Activated CD4-positive, alpha-beta memory T cell treated with anti-CD3 and anti-CD28 coated beads for 36 hours (primary cell): ENCODE measurements at regions of chr2 and their contacts with region 1.

Region 1: GRCh38 chr2:73963385-73964120 is 21.2 kb upstream of the TET3 start:
- DNase-seq: peak; percentile 74
- H3K4me3 Mint-ChIP-seq: peak overlapping the region; percentile 53
- H3K27ac Mint-ChIP-seq: peak overlapping the region; percentile 86
- H3K4me1 Mint-ChIP-seq: peaks cover 30% of the 10 kb centered on the region
- H3K27me3 Mint-ChIP-seq: no peaks in the 10 kb centered on the region

Region 2: GRCh38 chr2:73931531-73932500 is 31.7 kb before region 1 on chr2:
- CTCF ChIA-PET with region 1: no interaction called
- POLR2A ChIA-PET with region 1: interaction called, 4 read pairs
- intact Hi-C with region 1: loop called (anchors 1 kb)
- DNase-seq: peak; percentile 77
- H3K4me3 Mint-ChIP-seq: peak overlapping the region; percentile 4
- H3K27ac Mint-ChIP-seq: peak overlapping the region; percentile 75
- H3K4me1 Mint-ChIP-seq: peaks cover 75% of the 10 kb centered on the region
- H3K27me3 Mint-ChIP-seq: no peaks in the 10 kb centered on the region

Region 3: DNA sequence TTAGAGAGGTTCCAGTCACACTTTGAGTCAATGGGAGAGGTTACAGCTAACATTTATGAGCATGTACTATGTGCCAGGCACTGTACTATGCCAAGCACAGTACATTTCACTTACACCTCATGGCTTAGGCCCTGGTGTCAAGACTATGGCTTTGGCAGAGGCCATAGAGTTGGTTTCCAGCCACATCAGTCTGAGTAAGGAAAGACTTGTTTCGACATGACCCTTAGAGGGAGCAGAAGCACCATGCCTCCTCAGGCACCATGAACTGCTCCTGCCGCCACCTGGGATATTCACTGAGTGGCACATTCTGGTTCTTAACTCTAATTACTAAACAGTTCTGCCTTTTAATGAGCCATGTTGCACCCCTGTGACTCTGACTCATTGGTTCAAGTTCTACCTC is 24.1 kb before region 1 on chr2:
- CTCF ChIA-PET with region 1: interaction called, 4 read pairs
- POLR2A ChIA-PET with region 1: interaction called, 5 read pairs
- intact Hi-C with region 1: loop called (anchors 1 kb)
- DNase-seq: peak; percentile 56
- H3K4me3 Mint-ChIP-seq: no peak overlapping the region
- H3K27ac Mint-ChIP-seq: peak overlapping the region; percentile 73
- H3K4me1 Mint-ChIP-seq: peaks cover 85% of the 10 kb centered on the region
- H3K27me3 Mint-ChIP-seq: no peaks in the 10 kb centered on the region

Region 4: DNA sequence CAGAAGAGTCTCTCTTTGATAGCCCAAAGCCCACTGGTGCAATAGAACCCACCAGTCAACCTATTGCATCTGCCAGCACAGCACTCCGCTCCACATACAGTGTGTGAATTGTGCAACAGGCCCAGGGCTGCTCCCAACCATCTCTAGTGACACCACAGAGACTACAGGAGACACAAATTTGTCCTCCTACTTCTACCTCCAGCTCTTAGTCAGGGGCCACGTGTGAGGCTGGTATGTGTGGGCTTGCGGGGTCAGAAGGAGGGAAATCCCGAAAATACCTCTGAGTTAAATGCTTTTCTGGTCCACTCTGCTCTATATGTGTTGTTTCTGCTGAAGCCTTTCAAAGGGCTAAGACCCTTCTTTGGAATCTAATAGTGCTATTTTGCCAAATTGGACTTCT is 18.8 kb before region 1 on chr2:
- CTCF ChIA-PET with region 1: interaction called, 3 read pairs
- POLR2A ChIA-PET with region 1: interaction called, 5 read pairs
- intact Hi-C with region 1: loop called (anchors 1 kb)
- DNase-seq: peak; percentile 70
- H3K4me3 Mint-ChIP-seq: no peak overlapping the region
- H3K27ac Mint-ChIP-seq: peak overlapping the region; percentile 1
- H3K4me1 Mint-ChIP-seq: peaks cover 75% of the 10 kb centered on the region
- H3K27me3 Mint-ChIP-seq: no peaks in the 10 kb centered on the region

Region 5: GRCh38 chr2:73979686-73980085 is 16.1 kb after region 1 on chr2:
- CTCF ChIA-PET with region 1: no interaction called
- POLR2A ChIA-PET with region 1: interaction called, 11 read pairs
- intact Hi-C with region 1: loop called (anchors 1 kb)
- DNase-seq: peak; percentile 33
- H3K4me3 Mint-ChIP-seq: peak overlapping the region; percentile 53
- H3K27ac Mint-ChIP-seq: peak overlapping the region; percentile 78
- H3K4me1 Mint-ChIP-seq: peaks cover 62% of the 10 kb centered on the region
- H3K27me3 Mint-ChIP-seq: no peaks in the 10 kb centered on the region

Region 6: GRCh38 chr2:74002487-74003391 is 39.2 kb after region 1 on chr2:
- CTCF ChIA-PET with region 1: no interaction called
- POLR2A ChIA-PET with region 1: interaction called, 3 read pairs
- intact Hi-C with region 1: loop called (anchors 5 kb)
- DNase-seq: peak; percentile 84
- H3K4me3 Mint-ChIP-seq: peak overlapping the region; percentile 76
- H3K27ac Mint-ChIP-seq: peak overlapping the region; percentile 36
- H3K4me1 Mint-ChIP-seq: peaks cover 83% of the 10 kb centered on the region
- H3K27me3 Mint-ChIP-seq: no peaks in the 10 kb centered on the region